ENCODE measurements at regions of chr5 and their contacts with region 1.

Region 1: DNA sequence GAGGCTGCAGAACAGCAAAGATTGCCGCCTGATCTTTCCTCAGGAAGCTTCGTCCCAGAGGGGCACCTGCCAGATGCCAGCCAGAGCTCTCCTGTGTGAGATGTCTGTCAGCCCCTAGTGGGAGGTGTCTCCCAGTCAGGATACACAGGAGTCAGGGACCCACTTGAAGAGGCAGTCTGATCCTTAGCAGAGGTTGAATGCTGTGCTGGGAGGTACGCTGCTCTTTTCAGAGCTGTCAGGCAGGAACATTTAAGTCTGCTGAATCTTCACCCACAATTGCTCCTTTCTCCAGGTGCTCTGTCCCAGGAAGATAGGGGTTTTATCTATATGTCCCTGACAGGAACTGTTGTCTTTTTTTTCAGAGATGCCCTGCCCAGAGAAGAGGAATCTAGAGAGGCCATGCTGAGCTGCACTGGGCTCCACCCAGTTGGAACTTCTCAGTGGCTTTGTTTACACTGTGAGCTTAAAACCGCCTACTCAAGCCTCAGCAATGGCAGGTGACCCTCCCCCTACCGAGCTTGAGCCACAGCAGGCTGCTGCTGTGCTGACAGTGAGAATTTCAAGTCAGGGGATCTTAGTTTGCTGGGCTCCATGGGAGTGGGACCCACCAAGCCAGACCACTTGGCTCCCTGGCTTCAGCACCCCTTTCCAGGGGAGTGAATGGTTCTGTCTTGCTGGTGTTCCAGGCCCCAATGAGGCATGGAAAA is 169.1 kb downstream of the FBXL17 start:
- DNase-seq: no peak
- ATAC-seq: no peak
- H3K4me3 ChIP-seq: no peak overlapping the region
- H3K27ac ChIP-seq: no peak overlapping the region
- H3K4me1 ChIP-seq: no peaks in the 10 kb centered on the region
- H3K27me3 ChIP-seq: no peaks in the 10 kb centered on the region
- CTCF ChIP-seq: no peak

Region 2: GRCh38 chr5:108481355-108481931 is 268.6 kb after region 1 on chr5:
- CTCF ChIA-PET with region 1: interaction called, 10 read pairs
- POLR2A ChIA-PET with region 1: no interaction called
- in situ Hi-C with region 1: no loop called
- intact Hi-C with region 1: no loop called
- DNase-seq: peak; percentile 12
- ATAC-seq: no peak
- H3K4me3 ChIP-seq: no peak overlapping the region
- H3K27ac ChIP-seq: no peak overlapping the region
- H3K4me1 ChIP-seq: no peaks in the 10 kb centered on the region
- H3K27me3 ChIP-seq: 0 out of 2 replicates have a peak, but pooled peaks cover 2% of the 10 kb centered on the region
- CTCF ChIP-seq: peak; percentile 59

Measured in Panc1 (cell line).